ENCODE measurements at regions of chr6 and their contacts with region 1.

Region 1: GRCh38 chr6:132813173-132813856 is 1.1 kb upstream of the RPS12 start:
- DNase-seq: peak; percentile 75
- ATAC-seq: peak; percentile 18
- H3K4me3 ChIP-seq: peak overlapping the region; percentile 72 to 100 (median 83)
- H3K4me3 Mint-ChIP-seq: peak overlapping the region; percentile 98
- H3K27ac ChIP-seq: peak overlapping the region; percentile 65 to 82
- H3K27ac Mint-ChIP-seq: peak overlapping the region; percentile 98
- H3K4me1 ChIP-seq: peaks cover 25% of the 10 kb centered on the region in 2 donors
- H3K4me1 Mint-ChIP-seq: peaks cover 47% of the 10 kb centered on the region
- H3K27me3 ChIP-seq: no peaks in the 10 kb centered on the region
- H3K27me3 Mint-ChIP-seq: no peaks in the 10 kb centered on the region
- CTCF ChIP-seq: no peak

Region 2: DNA sequence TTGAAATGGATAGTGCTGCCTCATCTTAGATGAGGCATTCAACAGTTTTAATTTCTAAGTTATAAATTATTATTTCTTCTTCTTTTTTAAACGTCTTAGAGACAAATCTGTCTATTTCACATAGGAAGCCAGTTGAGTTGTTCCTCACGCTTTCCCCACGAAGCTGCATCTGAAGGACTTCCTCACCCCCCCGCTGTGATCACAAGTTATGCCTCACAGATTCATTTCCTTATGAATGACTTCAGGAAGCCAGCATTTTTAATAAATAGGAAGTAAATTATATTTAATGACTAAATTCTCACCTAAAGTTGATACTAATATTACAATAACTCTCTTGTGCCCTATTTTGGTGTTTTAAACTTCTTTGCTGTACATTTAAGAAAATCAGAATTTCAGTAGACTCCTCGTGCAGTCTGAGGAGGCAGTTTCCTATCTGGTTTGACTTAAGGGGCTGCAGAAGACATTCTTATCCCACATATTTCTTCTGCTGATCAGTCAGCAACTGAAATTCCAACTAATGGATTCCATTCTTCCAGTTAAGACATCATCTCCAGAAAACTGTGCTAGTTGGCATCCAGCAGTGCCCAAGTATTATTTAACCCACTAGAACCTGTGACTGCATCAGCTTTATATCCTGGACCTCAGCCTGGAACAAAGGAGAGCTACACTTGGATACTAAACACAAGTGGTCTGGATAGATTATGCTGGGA is 679.4 kb before region 1 on chr6:
- CTCF ChIA-PET with region 1: no interaction called
- POLR2A ChIA-PET with region 1: no interaction called
- intact Hi-C with region 1: loop called (anchors 2 kb)
- DNase-seq: peak; percentile 60
- ATAC-seq: peak; percentile 39
- H3K4me3 ChIP-seq: peak overlapping the region; percentile 34 to 55 (median 48)
- H3K4me3 Mint-ChIP-seq: peak overlapping the region; percentile 80
- H3K27ac ChIP-seq: peak overlapping the region; percentile 77 to 91
- H3K27ac Mint-ChIP-seq: peak overlapping the region; percentile 78
- H3K4me1 ChIP-seq: peaks cover 83% of the 10 kb centered on the region in 2 donors
- H3K4me1 Mint-ChIP-seq: peaks cover 79% of the 10 kb centered on the region
- H3K27me3 ChIP-seq: no peaks in the 10 kb centered on the region
- H3K27me3 Mint-ChIP-seq: no peaks in the 10 kb centered on the region
- CTCF ChIP-seq: no peak

Region 3: DNA sequence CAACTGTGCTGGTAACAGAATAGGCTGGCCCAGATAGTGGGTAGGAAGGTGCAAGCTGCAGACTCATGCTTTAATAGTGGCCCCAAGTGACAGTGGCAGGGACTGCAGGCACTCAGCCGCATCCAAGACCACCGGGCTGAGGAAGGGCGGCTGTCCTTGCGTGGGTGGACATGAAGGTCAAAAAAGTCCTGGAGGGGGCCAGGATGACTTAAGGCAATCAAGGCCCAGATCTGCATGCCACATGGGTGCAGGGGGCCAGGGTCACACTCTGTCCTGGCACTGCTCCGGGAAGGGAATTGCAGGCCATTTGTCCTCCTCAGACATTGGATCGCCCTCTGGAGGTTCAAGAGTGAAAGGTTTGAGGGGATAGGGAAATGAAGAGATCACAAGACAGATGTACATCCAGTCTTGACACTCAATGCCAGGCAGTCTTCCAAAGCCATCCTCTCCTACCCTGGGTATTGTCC is 45.2 kb before region 1 on chr6:
- CTCF ChIA-PET with region 1: no interaction called
- POLR2A ChIA-PET with region 1: interaction called, 5 read pairs
- intact Hi-C with region 1: loop called (anchors 1 kb)
- DNase-seq: peak; percentile 60
- ATAC-seq: peak; percentile 79
- H3K4me3 ChIP-seq: no peak overlapping the region
- H3K4me3 Mint-ChIP-seq: peak overlapping the region; percentile 27
- H3K27ac ChIP-seq: no peak overlapping the region
- H3K27ac Mint-ChIP-seq: peak overlapping the region; percentile 38
- H3K4me1 ChIP-seq: peaks cover 7 to 14% of the 10 kb centered on the region in 2 donors
- H3K4me1 Mint-ChIP-seq: peaks cover 22% of the 10 kb centered on the region
- H3K27me3 ChIP-seq: no peaks in the 10 kb centered on the region
- H3K27me3 Mint-ChIP-seq: no peaks in the 10 kb centered on the region
- CTCF ChIP-seq: peak; percentile 63

Measured in B cell (primary cell).